Naive thymus-derived CD4-positive, alpha-beta T cell (primary cell): ENCODE measurements at regions of chr4 and their contacts with region 1.

Region 1: GRCh38 chr4:74531963-74532794 is 87.2 kb downstream of the AREG start:
- DNase-seq: peak in 6 of 9 donors; percentile 2 to 34 (median 24)
- ATAC-seq: peak; percentile 74
- H3K4me3 ChIP-seq: no peak overlapping the region
- H3K4me3 Mint-ChIP-seq: no peak overlapping the region
- H3K27ac ChIP-seq: no peak overlapping the region
- H3K27ac Mint-ChIP-seq: no peak overlapping the region
- H3K4me1 ChIP-seq: no peaks in the 10 kb centered on the region
- H3K4me1 Mint-ChIP-seq: peaks cover 0 to 2% (median 0%) of the 10 kb centered on the region in 7 donors
- H3K27me3 ChIP-seq: no peaks in the 10 kb centered on the region
- H3K27me3 Mint-ChIP-seq: peaks cover 0 to 22% (median 11%) of the 10 kb centered on the region in 5 donors

Region 2: GRCh38 chr4:74189331-74190043 is 342.7 kb before region 1 on chr4:
- CTCF ChIA-PET with region 1: no interaction called
- POLR2A ChIA-PET with region 1: no interaction called
- intact Hi-C with region 1: loop called in 1 of 2 experiments (anchors 10 kb)
- DNase-seq: peak in 5 of 9 donors; percentile 17 to 45 (median 34)
- ATAC-seq: peak; percentile 68
- H3K4me3 ChIP-seq: no peak overlapping the region
- H3K4me3 Mint-ChIP-seq: no peak overlapping the region
- H3K27ac ChIP-seq: no peak overlapping the region
- H3K27ac Mint-ChIP-seq: no peak overlapping the region
- H3K4me1 ChIP-seq: no peaks in the 10 kb centered on the region
- H3K4me1 Mint-ChIP-seq: no peaks in the 10 kb centered on the region
- H3K27me3 ChIP-seq: no peaks in the 10 kb centered on the region
- H3K27me3 Mint-ChIP-seq: peaks cover 0 to 2% (median 0%) of the 10 kb centered on the region in 5 donors

Region 3: DNA sequence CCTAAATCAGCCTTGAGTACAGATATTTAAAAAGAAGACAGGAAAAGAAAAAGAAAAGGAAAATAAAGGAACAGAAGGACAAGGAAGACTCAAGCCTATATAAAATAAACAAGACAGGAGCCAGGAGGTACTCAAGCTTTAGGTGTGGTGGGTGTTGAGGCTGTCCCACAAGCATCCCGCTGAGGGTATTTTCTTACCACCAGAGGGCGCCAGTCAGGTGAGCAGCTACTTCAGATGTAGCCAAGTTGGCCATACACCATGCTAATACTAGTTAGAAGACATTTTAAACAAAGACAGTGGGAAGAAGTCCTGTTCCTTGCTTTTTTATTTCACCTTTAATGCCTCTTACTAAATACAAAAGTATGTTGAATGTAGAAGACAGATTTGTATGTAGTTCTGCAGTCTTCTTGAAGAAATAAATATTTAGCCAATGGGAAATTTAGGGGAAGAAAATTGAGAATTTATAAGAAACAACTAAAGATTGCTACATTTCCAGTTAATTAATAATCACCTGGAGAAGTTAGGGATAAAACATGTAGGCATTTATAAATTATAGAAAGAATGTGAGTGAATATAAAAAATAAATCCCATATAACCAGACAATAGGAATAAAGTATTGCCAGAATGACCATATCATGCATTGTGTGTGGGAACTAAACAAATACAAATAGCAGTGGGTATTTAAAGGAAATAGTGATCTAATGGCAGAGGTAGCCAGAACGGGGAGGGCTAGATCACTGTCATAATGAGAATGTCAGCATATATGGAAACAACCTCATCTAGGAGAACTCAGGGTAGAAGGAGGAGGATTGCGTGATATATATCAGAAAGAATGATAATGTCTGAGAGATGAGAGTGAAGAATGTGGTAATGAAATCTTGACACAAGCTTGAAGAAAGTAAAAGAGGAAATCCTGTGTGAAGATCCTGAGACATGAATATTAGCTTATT is 303.2 kb before region 1 on chr4:
- CTCF ChIA-PET with region 1: no interaction called
- POLR2A ChIA-PET with region 1: no interaction called
- intact Hi-C with region 1: loop called in 1 of 2 experiments (anchors 1 kb)
- DNase-seq: peak; percentile 37 to 79 (median 68)
- ATAC-seq: peak; percentile 76
- H3K4me3 ChIP-seq: no peak overlapping the region
- H3K4me3 Mint-ChIP-seq: no peak overlapping the region
- H3K27ac ChIP-seq: no peak overlapping the region
- H3K27ac Mint-ChIP-seq: peak overlapping the region in 1 of 9 donors; percentile 15
- H3K4me1 ChIP-seq: no peaks in the 10 kb centered on the region
- H3K4me1 Mint-ChIP-seq: peaks cover 0 to 7% (median 0%) of the 10 kb centered on the region in 7 donors
- H3K27me3 ChIP-seq: no peaks in the 10 kb centered on the region
- H3K27me3 Mint-ChIP-seq: no peaks in the 10 kb centered on the region

Region 4: DNA sequence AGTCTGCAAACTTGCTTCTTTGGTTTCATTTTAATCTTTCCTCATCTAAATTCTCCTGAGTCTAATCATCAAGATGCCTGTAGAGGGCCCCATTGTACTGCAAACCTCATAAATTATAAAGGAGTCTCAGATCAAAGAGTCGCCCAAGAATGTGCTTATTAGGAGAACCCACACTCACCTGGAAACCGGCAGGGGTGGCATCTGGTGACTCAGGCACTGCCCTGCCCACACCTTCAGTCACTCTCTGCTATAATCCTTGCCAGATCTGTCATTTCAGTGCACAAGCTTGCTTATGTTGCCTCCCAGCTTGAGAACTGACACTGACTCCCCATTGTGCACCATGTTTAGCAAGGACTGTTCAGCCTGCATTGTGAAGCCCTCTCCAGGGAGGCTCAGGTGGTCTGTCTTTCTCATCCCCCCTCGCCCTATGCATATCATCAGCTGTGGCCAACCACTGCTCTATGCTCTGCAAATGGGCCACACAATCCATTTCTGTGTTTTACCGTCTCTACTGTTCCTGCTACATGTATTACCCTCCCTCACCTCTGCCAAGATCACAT is 211.5 kb before region 1 on chr4:
- CTCF ChIA-PET with region 1: no interaction called
- POLR2A ChIA-PET with region 1: no interaction called
- intact Hi-C with region 1: loop called in 1 of 2 experiments (anchors 5 kb)
- DNase-seq: peak in 6 of 9 donors; percentile 17 to 35 (median 24)
- ATAC-seq: peak; percentile 82
- H3K4me3 ChIP-seq: no peak overlapping the region
- H3K4me3 Mint-ChIP-seq: no peak overlapping the region
- H3K27ac ChIP-seq: no peak overlapping the region
- H3K27ac Mint-ChIP-seq: no peak overlapping the region
- H3K4me1 ChIP-seq: no peaks in the 10 kb centered on the region
- H3K4me1 Mint-ChIP-seq: peaks cover 0 to 6% (median 0%) of the 10 kb centered on the region in 7 donors
- H3K27me3 ChIP-seq: no peaks in the 10 kb centered on the region
- H3K27me3 Mint-ChIP-seq: peaks cover 4 to 23% (median 19%) of the 10 kb centered on the region in 5 donors

Region 5: DNA sequence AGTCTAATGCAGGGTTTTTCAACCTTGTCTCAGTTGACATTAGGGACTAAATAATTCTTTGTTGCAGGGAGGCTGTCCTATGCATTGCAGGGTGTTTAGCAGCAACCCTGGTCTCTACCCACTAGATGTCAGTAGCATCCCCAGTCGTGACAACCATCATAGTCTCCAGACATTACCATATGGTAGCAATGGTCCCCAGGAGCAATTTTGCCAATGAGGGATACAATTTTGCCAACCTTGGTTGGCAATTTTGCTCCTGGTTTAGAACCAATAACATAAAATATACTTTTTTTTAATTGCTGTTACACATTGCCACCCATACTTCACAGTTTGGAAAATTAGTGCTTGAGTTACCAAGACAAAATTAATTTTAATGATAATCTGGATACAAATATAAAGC is 161.3 kb before region 1 on chr4:
- CTCF ChIA-PET with region 1: interaction called, 46 read pairs
- POLR2A ChIA-PET with region 1: no interaction called
- intact Hi-C with region 1: loop called in 1 of 2 experiments (anchors 1 kb)
- DNase-seq: peak in 6 of 9 donors; percentile 12 to 36 (median 22)
- ATAC-seq: peak; percentile 80
- H3K4me3 ChIP-seq: no peak overlapping the region
- H3K4me3 Mint-ChIP-seq: no peak overlapping the region
- H3K27ac ChIP-seq: no peak overlapping the region
- H3K27ac Mint-ChIP-seq: no peak overlapping the region
- H3K4me1 ChIP-seq: no peaks in the 10 kb centered on the region
- H3K4me1 Mint-ChIP-seq: no peaks in the 10 kb centered on the region
- H3K27me3 ChIP-seq: peaks cover 0 to under 1% of the 10 kb centered on the region in 2 donors
- H3K27me3 Mint-ChIP-seq: peaks cover 20 to 43% (median 24%) of the 10 kb centered on the region in 5 donors

Region 6: GRCh38 chr4:74376888-74377483 is 155.2 kb before region 1 on chr4:
- CTCF ChIA-PET with region 1: interaction called, 46 read pairs
- POLR2A ChIA-PET with region 1: no interaction called
- intact Hi-C with region 1: loop called (anchors 1 kb)
- DNase-seq: peak in 7 of 9 donors; percentile 25 to 60 (median 48)
- ATAC-seq: peak; percentile 73
- H3K4me3 ChIP-seq: no peak overlapping the region
- H3K4me3 Mint-ChIP-seq: no peak overlapping the region
- H3K27ac ChIP-seq: no peak overlapping the region
- H3K27ac Mint-ChIP-seq: no peak overlapping the region
- H3K4me1 ChIP-seq: no peaks in the 10 kb centered on the region
- H3K4me1 Mint-ChIP-seq: no peaks in the 10 kb centered on the region
- H3K27me3 ChIP-seq: no peaks in the 10 kb centered on the region
- H3K27me3 Mint-ChIP-seq: peaks cover 0 to 16% (median 8%) of the 10 kb centered on the region in 5 donors